ENCODE measurements at regions of chr1 and their contacts with region 1.

Region 1: DNA sequence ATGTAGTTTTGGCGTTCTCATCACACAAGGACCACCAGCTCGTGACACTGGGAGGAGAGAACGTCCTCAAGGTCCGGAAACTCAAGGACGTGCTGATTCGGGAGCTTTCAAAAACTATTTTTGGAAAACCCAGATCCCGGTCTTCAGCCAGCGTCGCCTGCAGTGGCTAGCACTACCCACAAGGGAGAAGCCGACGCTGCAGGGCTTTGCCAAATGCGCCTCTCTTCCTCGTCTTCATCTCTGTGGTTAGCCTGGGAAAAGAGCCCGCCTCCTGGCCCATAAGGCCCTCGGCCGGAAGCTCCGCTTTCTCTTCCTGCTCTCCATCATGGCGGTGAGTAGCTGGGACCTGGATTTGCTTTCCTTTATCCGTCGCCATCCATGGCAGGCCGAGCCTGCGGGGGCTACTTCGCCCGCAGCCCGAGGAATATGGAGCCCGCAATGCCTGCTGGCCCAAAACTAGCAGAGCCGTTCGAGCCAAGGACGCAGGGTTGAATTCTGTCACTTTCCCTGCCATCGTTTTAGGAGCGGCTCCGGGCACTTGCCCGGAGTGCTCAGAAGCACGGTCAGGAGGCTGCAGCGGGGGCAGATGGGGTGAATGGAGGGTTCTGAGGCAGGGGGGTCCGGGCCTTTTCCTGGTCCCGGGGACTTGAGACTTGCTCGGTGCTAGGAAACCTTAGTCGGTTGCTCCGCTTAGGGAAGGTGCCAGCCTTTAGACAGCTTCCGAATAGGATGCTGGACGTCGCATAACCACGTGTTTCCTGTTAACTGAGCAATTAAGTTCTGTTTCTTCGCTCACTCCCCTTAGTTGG is at the start of gene RPL11:
- DNase-seq: peak; percentile 73
- ATAC-seq: peak; percentile 99
- H3K4me3 Mint-ChIP-seq: peak within 1 kb of the TSS; percentile 98
- H3K27ac Mint-ChIP-seq: peak within 1 kb of the TSS; percentile 93
- H3K4me1 Mint-ChIP-seq: peaks cover 46% of the 10 kb centered on the region
- H3K27me3 Mint-ChIP-seq: no peaks in the 10 kb centered on the region
- CTCF ChIP-seq: peak; percentile 39
- total RNA-seq, gene RPL11: 1,956 and 2,021 TPM in 2 replicates

Region 2: DNA sequence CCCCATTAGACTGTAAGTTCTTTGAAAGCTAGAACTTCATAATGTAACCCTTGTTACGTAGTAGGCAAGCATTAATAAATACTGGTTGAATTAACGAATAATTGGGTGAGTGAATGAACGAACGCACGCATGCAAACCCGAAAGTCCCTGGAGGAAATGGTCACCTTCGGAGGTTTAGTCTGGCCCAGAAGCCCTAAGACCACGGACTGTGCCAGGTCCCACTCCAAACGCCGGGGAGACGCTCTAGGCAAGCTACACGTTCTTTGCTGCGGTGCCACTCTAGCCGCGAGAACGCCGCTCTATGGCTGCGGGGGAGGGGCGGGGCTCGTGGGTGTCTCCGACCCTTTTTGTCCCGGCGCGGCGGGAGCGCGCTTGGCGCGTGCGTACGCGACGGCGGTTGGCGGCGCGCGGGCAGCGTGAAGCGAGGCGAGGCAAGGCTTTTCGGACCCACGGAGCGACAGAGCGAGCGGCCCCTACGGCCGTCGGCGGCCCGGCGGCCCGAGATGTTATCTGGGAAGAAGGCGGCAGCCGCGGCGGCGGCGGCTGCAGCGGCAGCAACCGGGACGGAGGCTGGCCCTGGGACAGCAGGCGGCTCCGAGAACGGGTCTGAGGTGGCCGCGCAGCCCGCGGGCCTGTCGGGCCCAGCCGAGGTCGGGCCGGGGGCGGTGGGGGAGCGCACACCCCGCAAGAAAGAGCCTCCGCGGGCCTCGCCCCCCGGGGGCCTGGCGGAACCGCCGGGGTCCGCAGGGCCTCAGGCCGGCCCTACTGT is 672.4 kb before region 1 on chr1 and contains the start of gene KDM1A:
- CTCF ChIA-PET with region 1: no interaction called
- POLR2A ChIA-PET with region 1: no interaction called
- intact Hi-C with region 1: loop called (anchors 2 kb)
- DNase-seq: peak; percentile 96
- ATAC-seq: peak; percentile 98
- H3K4me3 Mint-ChIP-seq: peak within 1 kb of the TSS; percentile 93
- H3K27ac Mint-ChIP-seq: peak within 1 kb of the TSS; percentile 84
- H3K4me1 Mint-ChIP-seq: peaks cover 38% of the 10 kb centered on the region
- H3K27me3 Mint-ChIP-seq: no peaks in the 10 kb centered on the region
- CTCF ChIP-seq: no peak
- total RNA-seq, gene KDM1A: 40.7 and 41.5 TPM in 2 replicates

Region 3: GRCh38 chr1:23718482-23718881 is 26.8 kb after region 1 on chr1:
- CTCF ChIA-PET with region 1: interaction called, 7 read pairs
- POLR2A ChIA-PET with region 1: interaction called, 143 read pairs
- intact Hi-C with region 1: loop called (anchors 1 kb)
- DNase-seq: no peak
- ATAC-seq: no peak
- H3K4me3 Mint-ChIP-seq: no peak overlapping the region
- H3K27ac Mint-ChIP-seq: peak overlapping the region; percentile 75
- H3K4me1 Mint-ChIP-seq: peaks cover 53% of the 10 kb centered on the region
- H3K27me3 Mint-ChIP-seq: no peaks in the 10 kb centered on the region
- CTCF ChIP-seq: no peak

Region 4: GRCh38 chr1:23727362-23727827 is 35.7 kb after region 1 on chr1:
- CTCF ChIA-PET with region 1: interaction called, 9 read pairs
- POLR2A ChIA-PET with region 1: interaction called, 143 read pairs
- intact Hi-C with region 1: no loop called
- DNase-seq: no peak
- ATAC-seq: no peak
- H3K4me3 Mint-ChIP-seq: peak overlapping the region; percentile 70
- H3K27ac Mint-ChIP-seq: peak overlapping the region; percentile 89
- H3K4me1 Mint-ChIP-seq: peaks cover 73% of the 10 kb centered on the region
- H3K27me3 Mint-ChIP-seq: no peaks in the 10 kb centered on the region
- CTCF ChIP-seq: no peak

Region 5: GRCh38 chr1:23743287-23744052 is 51.8 kb after region 1 on chr1 and contains the start of gene ELOA:
- CTCF ChIA-PET with region 1: interaction called, 40 read pairs
- POLR2A ChIA-PET with region 1: interaction called, 229 read pairs
- intact Hi-C with region 1: loop called (anchors 1 kb)
- DNase-seq: peak; percentile 76
- ATAC-seq: peak; percentile 91
- H3K4me3 Mint-ChIP-seq: peak within 1 kb of the TSS; percentile 90
- H3K27ac Mint-ChIP-seq: peak within 1 kb of the TSS; percentile 89
- H3K4me1 Mint-ChIP-seq: peaks cover 52% of the 10 kb centered on the region
- H3K27me3 Mint-ChIP-seq: no peaks in the 10 kb centered on the region
- CTCF ChIP-seq: no peak
- total RNA-seq, gene ELOA: 70.2 and 72.6 TPM in 2 replicates

Region 6: GRCh38 chr1:23751050-23751814 is 59.5 kb after region 1 on chr1:
- CTCF ChIA-PET with region 1: interaction called, 40 read pairs
- POLR2A ChIA-PET with region 1: interaction called, 229 read pairs
- intact Hi-C with region 1: loop called (anchors 1 kb)
- DNase-seq: no peak
- ATAC-seq: peak; percentile 84
- H3K4me3 Mint-ChIP-seq: no peak overlapping the region
- H3K27ac Mint-ChIP-seq: peak overlapping the region; percentile 41
- H3K4me1 Mint-ChIP-seq: peaks cover 33% of the 10 kb centered on the region
- H3K27me3 Mint-ChIP-seq: no peaks in the 10 kb centered on the region
- CTCF ChIP-seq: peak; percentile 25

Region 7: GRCh38 chr1:23777979-23778814 is 86.5 kb after region 1 on chr1 and contains the start of gene PITHD1:
- CTCF ChIA-PET with region 1: interaction called, 3 read pairs
- POLR2A ChIA-PET with region 1: interaction called, 17 read pairs
- intact Hi-C with region 1: no loop called
- DNase-seq: peak; percentile 83
- ATAC-seq: peak; percentile 86
- H3K4me3 Mint-ChIP-seq: peak within 1 kb of the TSS; percentile 91
- H3K27ac Mint-ChIP-seq: peak within 1 kb of the TSS; percentile 90
- H3K4me1 Mint-ChIP-seq: peaks cover 30% of the 10 kb centered on the region
- H3K27me3 Mint-ChIP-seq: no peaks in the 10 kb centered on the region
- CTCF ChIP-seq: no peak
- total RNA-seq, gene PITHD1: 58.7 and 63.3 TPM in 2 replicates